H1 (cell line): ENCODE measurements at regions of chr17 and their contacts with region 1.

Region 1: GRCh38 chr17:7454980-7455379 is 10.1 kb downstream of the CHRNB1 start:
- DNase-seq: no peak
- H3K4me3 ChIP-seq: peak overlapping the region in 2 of 4 experiments; percentile 78 to 87; a peak in 4 of 8 replicates
- H3K27ac ChIP-seq: no peak overlapping the region
- H3K4me1 ChIP-seq: peaks cover 0 to 8% (median 0%) of the 10 kb centered on the region in 4 experiments; a peak in 2 of 7 replicates
- H3K27me3 ChIP-seq: no peaks in the 10 kb centered on the region; a peak in 1 of 7 replicates
- CTCF ChIP-seq: no peak
- EP300 ChIP-seq: no peak
- POLR2A ChIP-seq: no peak
- RAD21 ChIP-seq: no peak

Region 2: DNA sequence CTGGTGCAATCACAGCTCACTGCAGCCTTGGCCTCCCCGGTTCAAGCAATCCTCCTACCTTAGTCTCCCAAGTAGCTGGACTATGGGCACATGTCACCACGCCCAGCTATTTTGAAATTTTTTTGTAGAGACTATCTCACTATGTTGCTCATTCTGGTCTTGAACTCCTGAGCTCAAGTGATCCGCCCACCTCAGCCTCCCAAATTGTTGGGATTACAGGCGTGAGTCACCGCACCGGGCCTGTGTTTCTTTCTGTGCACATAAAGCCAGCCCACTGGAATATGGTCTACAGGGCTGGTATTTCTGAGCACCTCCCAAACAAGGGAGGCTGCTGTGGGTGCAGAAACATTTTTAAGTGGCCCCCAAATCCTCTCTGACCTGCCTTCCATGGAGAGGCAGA is 91.7 kb before region 1 on chr17:
- CTCF ChIA-PET with region 1: no interaction called
- POLR2A ChIA-PET with region 1: no interaction called
- DNase-seq: no peak
- H3K4me3 ChIP-seq: no peak overlapping the region
- H3K27ac ChIP-seq: no peak overlapping the region
- H3K4me1 ChIP-seq: peaks cover 0 to 9% (median 3%) of the 10 kb centered on the region in 4 experiments; a peak in 4 of 7 replicates
- H3K27me3 ChIP-seq: no peaks in the 10 kb centered on the region
- CTCF ChIP-seq: no peak
- EP300 ChIP-seq: no peak
- POLR2A ChIP-seq: no peak
- RAD21 ChIP-seq: no peak

Region 3: DNA sequence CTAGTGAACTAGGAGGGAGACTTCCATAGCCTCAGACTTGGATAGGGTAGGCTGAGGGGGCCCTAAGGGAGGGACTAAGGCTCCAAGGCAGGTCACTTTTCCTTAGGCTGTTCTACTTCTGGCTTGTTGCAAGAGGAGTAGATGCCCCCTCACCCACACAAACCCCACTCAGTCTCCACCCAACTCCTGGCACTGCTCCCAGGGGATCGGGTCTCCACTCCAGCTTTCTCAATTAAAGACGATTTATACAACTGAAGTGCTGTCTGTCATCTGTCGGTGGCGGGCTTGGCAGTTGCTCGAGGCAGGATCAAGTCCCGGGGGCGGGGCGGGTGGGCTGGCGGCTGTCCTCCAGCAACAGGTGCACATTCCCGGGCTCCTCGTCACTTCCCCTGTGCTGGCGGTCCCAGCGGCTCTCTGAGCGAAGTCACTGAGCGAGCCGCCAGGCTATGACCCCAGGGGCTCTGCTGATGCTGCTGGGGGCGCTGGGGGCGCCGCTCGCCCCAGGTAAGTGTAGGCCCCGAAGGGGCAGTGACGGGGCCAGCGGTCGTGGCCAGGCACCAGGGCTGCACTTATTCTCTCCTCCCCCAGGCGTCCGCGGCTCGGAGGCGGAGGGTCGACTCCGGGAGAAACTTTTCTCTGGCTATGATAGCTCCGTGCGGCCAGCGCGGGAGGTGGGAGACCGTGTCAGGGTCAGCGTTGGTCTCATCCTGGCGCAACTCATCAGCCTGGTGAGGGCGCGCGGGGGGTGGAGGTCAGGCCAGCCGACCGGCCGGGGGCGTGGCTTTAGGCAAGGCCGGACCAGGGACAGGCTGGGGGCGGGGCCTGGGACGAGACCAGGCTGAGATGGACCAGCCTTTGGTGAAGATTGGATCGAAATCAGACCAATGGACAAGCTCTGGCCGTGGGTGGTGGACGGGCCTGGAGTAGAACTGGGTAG is 10.0 kb before region 1 on chr17 and contains the start of gene CHRNB1:
- CTCF ChIA-PET with region 1: interaction called, 6 read pairs
- POLR2A ChIA-PET with region 1: interaction called, 17 read pairs
- DNase-seq: peak in 1 of 2 experiments; percentile 94
- H3K4me3 ChIP-seq: peak within 1 kb of the TSS; percentile 39 to 73 (median 66)
- H3K27ac ChIP-seq: peak within 1 kb of the TSS; percentile 47; the same call in 1 of the 2 replicates
- H3K4me1 ChIP-seq: peaks cover 3 to 17% (median 13%) of the 10 kb centered on the region in 4 experiments
- H3K27me3 ChIP-seq: peaks cover 0 to 8% (median 6%) of the 10 kb centered on the region in 4 experiments; a peak in 6 of 7 replicates
- CTCF ChIP-seq: no peak
- EP300 ChIP-seq: no peak
- POLR2A ChIP-seq: no peak
- RAD21 ChIP-seq: no peak
- total RNA-seq, gene CHRNB1: 13.8 and 14.1 TPM in 2 replicates